Activated T-helper 1 cell treated with anti-CD3 and anti-CD28 coated beads, Interleukin-12 subunit alpha, Interleukin-12 subunit beta, Interleukin-2, Interleukin-4 antibody, amounts not matched to agents 30 ng/mL and 10 ng/mL and 1 ng/mL, durations not matched to agents 14 hours and 24 hours and 36 hours (primary cell): ENCODE measurements at regions of chr5 and their contacts with region 1.

Region 1: GRCh38 chr5:131357739-131358561 is 94.1 kb downstream of the CDC42SE2 start:
- DNase-seq: peak; percentile 26
- H3K4me3 Mint-ChIP-seq: peak overlapping the region; percentile 37
- H3K27ac Mint-ChIP-seq: peak overlapping the region; percentile 88
- H3K4me1 Mint-ChIP-seq: peaks cover 46% of the 10 kb centered on the region
- H3K27me3 Mint-ChIP-seq: no peaks in the 10 kb centered on the region

Region 2: DNA sequence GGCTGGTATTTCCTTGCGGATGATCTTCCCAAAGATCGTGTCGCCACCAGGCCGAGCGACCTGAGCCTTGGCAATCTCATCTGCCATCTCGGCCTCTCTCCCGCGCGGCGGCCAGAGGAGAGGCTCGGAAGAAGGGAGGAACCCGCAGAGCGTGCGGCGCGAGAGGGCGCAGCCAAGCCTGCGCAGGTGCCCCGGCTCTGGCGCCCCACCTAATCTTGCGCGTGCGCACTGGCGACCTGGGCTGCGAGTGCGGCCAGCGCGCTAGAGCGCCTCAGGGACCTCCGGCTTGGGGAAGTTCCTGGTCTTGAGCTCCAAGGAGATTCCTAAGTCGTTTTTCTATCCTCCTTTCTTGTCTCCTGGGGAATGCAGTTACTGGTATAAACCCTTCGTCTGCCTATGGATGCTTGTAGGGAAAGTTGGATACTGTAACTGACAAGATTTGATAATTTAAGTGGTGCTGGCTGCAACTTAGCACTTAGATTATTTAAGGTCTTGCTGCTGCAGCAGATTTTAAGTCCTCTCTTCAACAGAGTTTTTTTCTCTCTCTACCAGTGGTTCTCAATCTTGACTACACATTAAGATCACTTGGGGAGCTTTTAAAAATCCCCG is 192.7 kb before region 1 on chr5 and contains the start of gene HINT1:
- intact Hi-C with region 1: loop called (anchors 1 kb)
- DNase-seq: peak; percentile 93
- H3K4me3 Mint-ChIP-seq: peak within 1 kb of the TSS; percentile 99
- H3K27ac Mint-ChIP-seq: peak within 1 kb of the TSS; percentile 99
- H3K4me1 Mint-ChIP-seq: peaks cover 55% of the 10 kb centered on the region
- H3K27me3 Mint-ChIP-seq: peaks cover 2% of the 10 kb centered on the region
- total RNA-seq, gene HINT1: 249 and 262 TPM in 2 replicates

Region 3: DNA sequence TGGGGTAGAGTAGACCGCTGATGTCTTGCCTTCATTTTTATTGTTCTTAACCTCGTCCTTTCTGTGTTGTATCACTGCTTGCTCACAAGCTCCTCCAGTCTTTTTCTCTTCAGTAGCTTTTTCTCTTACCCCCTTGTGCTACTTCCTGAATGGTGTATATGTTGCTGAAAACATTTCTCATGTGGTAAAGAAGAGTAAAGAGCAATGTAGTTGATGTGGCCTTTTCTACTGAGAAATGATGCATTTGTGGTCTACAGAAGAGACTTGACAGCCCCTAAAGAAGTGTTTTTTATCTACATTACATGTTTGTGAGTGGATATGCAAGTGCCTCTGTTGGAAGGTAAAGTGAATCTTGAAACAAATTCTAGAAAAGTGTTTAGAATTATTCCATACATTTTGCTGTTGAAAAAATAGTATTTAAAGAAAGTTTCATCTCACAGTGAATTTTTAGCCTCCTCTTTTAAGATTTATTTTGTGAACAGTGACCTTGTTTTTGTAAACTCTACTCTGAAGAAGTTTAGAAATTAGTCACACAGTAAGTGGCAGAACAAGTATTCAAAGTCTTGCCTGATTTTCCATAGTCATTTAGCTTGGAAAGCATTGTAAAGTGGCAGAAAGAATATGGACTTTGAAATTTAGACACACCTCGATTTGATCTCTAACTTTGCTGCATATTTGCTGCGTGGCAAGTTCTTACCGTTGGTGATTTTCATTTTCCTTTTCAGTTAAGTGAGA is 76.7 kb before region 1 on chr5:
- intact Hi-C with region 1: loop called (anchors 1 kb)
- DNase-seq: no peak
- H3K4me3 Mint-ChIP-seq: peak overlapping the region; percentile 86
- H3K27ac Mint-ChIP-seq: peak overlapping the region; percentile 91
- H3K4me1 Mint-ChIP-seq: peaks cover 78% of the 10 kb centered on the region
- H3K27me3 Mint-ChIP-seq: peaks cover 5% of the 10 kb centered on the region

Region 4: DNA sequence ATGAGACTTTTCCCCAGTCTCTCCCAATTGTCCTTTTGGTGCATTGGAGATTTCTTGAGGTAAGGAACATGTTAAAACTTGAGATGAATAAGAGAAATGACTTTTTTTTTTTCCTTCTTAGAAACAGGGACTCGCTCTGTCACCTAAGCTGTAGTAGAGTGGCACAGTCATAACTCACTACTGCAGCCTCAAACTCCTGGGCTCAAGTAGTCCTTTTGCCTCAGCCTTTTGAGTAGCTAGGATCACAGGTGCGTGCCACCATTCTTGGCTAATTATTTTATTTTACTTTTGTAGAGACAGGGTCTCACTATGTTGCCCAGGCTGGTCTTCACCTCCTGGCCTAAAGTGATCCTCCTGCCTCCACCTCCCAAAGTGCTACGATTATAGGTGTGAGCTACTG is 68.2 kb before region 1 on chr5:
- intact Hi-C with region 1: loop called (anchors 1 kb)
- DNase-seq: no peak
- H3K4me3 Mint-ChIP-seq: peak overlapping the region; percentile 77
- H3K27ac Mint-ChIP-seq: peak overlapping the region; percentile 96
- H3K4me1 Mint-ChIP-seq: peaks cover 49% of the 10 kb centered on the region
- H3K27me3 Mint-ChIP-seq: no peaks in the 10 kb centered on the region

Region 5: DNA sequence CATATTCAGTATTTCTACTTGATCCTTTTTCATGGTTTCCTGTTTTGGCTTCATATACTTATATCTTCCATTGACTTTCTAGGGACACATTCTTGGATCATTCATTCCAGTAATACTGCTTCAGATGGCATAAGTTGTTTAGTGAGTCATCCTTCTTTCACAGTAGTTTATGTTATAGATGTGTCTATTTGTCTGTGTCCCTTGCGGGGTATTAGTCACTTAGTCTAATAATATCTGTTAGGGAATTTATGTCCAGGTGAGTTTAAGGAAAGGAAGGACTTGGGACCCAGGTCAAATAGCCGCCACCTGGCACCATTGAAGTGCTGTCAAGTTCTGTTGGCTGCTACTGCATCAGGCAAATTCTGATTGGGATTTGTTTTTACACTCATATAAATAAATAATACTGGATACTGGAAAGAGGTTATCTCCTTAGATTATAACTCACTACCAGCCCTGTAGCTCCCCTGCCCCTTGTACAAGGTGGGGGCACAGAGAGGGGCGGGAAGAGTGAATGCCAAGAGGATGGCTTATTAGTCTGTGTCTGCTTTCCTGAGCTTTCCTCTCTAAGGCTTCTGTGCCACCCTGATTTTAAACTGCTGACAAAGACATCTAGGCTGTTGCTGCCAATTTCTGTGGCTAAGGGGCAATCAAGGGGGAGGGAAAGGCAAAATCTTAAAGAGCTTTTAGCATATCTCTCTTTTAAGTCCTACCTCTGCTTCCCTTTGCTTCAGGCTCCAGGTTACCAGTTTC is 29.2 kb before region 1 on chr5:
- intact Hi-C with region 1: loop called (anchors 1 kb)
- DNase-seq: no peak
- H3K4me3 Mint-ChIP-seq: no peak overlapping the region
- H3K27ac Mint-ChIP-seq: peak overlapping the region; percentile 50
- H3K4me1 Mint-ChIP-seq: peaks cover 65% of the 10 kb centered on the region
- H3K27me3 Mint-ChIP-seq: no peaks in the 10 kb centered on the region

Region 6: GRCh38 chr5:131338051-131338453 is 19.9 kb before region 1 on chr5:
- intact Hi-C with region 1: loop called (anchors 2 kb)
- DNase-seq: no peak
- H3K4me3 Mint-ChIP-seq: no peak overlapping the region
- H3K27ac Mint-ChIP-seq: peak overlapping the region; percentile 29
- H3K4me1 Mint-ChIP-seq: peaks cover 67% of the 10 kb centered on the region
- H3K27me3 Mint-ChIP-seq: no peaks in the 10 kb centered on the region

Region 7: GRCh38 chr5:131854134-131854533 is 496.2 kb after region 1 on chr5:
- intact Hi-C with region 1: no loop called
- DNase-seq: peak; percentile 6
- H3K4me3 Mint-ChIP-seq: peak overlapping the region; percentile 24
- H3K27ac Mint-ChIP-seq: peak overlapping the region; percentile 10
- H3K4me1 Mint-ChIP-seq: peaks cover 28% of the 10 kb centered on the region
- H3K27me3 Mint-ChIP-seq: peaks cover 5% of the 10 kb centered on the region